HEK293T (cell line): ENCODE measurements at regions of chr17 and their contacts with region 1.

Region 1: DNA sequence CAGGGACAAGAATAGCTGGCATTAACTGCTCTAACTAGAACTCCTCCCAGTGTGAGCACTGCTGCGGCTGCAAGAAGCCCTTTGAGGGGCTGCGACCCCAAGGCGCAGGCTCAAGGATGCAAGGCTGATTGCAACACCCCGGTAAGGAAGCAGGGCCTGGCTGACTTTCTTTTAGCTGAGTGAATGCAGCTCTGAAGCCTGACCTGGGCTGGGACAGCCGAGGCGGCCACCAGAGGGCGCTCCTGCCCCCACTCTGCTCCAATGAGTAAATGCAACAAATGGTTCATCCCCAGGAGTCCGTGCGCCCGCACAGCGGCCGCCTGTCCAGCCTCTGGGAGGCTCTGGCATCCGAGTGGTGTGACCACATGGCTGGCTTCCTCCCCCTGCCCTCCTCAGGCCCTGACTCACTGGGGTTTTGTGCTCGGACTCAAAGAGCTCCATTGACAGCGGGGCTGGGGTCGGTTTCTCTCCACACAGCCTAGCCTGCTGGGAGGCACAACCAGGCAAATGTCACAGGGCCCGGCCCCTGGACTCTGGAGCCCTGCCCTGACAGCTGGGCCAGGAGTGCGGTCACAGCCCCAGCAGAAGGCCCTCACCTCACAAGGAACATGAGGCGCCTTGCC is at the start of gene SMIM5:
- DNase-seq: peak; percentile 91

Region 2: GRCh38 chr17:75614006-75614405 is 19.0 kb before region 1 on chr17:
- CTCF ChIA-PET with region 1: interaction called, 58 read pairs
- POLR2A ChIA-PET with region 1: interaction called, 3 read pairs
- DNase-seq: peak; percentile 74

Region 3: DNA sequence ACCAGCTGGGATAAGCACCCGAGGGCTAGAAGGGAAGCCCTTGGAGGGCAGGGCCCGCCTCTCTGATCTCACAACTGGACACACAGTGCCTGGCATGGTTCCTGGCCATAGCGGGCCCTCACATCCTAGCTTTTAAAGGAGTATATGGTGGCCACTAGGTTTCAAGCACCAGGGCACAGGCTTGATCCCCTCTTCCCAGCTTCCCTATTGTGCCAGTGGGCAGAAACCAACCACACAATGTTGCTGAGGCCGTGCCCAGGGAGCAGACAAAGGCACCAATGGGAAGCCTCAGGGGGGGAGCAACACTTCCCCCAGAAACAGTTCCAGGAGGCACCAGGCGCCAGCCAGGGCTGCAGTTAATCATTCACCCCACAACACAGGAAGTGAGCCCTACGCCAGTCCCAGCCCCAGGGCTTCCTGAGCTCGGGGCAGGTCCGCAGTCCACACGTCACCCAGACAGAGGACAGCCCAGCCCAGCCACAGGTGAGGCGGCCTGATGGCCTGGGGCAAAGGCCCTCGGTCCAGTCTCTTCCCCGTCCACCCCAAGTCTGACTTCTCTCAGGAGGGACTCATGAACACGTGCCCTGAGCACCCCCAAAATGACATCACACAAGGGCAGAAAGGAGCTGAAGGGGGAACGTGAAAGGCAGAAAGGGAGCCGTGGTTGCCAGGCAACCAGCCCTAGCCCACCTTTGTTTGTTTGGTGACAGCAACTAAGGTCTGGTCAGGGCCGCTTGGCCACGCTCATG is 13.1 kb after region 1 on chr17:
- CTCF ChIA-PET with region 1: interaction called, 69 read pairs
- POLR2A ChIA-PET with region 1: no interaction called
- DNase-seq: no peak

Region 4: DNA sequence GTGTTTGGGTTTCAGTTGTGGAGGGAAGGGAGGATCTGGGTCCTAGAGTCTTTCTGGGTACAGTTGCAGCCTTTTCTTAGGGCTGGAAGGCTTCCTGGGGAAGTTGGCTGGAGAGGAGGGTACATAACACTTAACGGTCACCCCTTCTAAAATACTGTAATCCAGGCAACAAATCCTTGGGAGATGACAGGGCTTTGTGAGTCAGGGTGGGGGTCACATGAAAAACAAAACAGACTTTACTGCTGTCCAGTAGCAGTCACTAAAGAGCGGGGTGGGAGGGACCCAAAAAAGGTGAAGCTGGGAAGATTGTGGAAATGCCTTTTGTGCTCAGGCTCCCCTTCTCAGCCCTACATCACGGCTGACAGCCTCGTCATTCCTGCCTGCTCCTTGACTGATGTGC is 40.5 kb after region 1 on chr17:
- CTCF ChIA-PET with region 1: interaction called, 11 read pairs
- POLR2A ChIA-PET with region 1: no interaction called
- DNase-seq: no peak

Region 5: GRCh38 chr17:75720725-75721462 is 87.9 kb after region 1 on chr17 and contains the start of gene ITGB4:
- CTCF ChIA-PET with region 1: no interaction called
- POLR2A ChIA-PET with region 1: no interaction called
- DNase-seq: peak; percentile 36